RWPE1 (cell line): ENCODE measurements at regions of chr6 and their contacts with region 1.

Region 1: GRCh38 chr6:125154757-125155135 is 1.2 kb downstream of the TPD52L1 start:
- DNase-seq: peak; percentile 76
- H3K27ac ChIP-seq: no peak overlapping the region
- CTCF ChIP-seq: peak; percentile 48

Region 2: GRCh38 chr6:124823240-124824111 is 331.3 kb before region 1 on chr6:
- CTCF ChIA-PET with region 1: no interaction called
- POLR2A ChIA-PET with region 1: no interaction called
- DNase-seq: no peak
- H3K27ac ChIP-seq: no peak overlapping the region
- CTCF ChIP-seq: no peak

Region 3: GRCh38 chr6:125001684-125002405 is 152.9 kb before region 1 on chr6:
- CTCF ChIA-PET with region 1: no interaction called
- POLR2A ChIA-PET with region 1: no interaction called
- DNase-seq: no peak
- H3K27ac ChIP-seq: no peak overlapping the region
- CTCF ChIP-seq: no peak

Region 4: GRCh38 chr6:125191916-125192609 is 37.3 kb after region 1 on chr6:
- CTCF ChIA-PET with region 1: interaction called, 13 read pairs
- POLR2A ChIA-PET with region 1: no interaction called
- DNase-seq: peak; percentile 73
- H3K27ac ChIP-seq: peak overlapping the region; percentile 45
- CTCF ChIP-seq: peak; percentile 69

Region 5: DNA sequence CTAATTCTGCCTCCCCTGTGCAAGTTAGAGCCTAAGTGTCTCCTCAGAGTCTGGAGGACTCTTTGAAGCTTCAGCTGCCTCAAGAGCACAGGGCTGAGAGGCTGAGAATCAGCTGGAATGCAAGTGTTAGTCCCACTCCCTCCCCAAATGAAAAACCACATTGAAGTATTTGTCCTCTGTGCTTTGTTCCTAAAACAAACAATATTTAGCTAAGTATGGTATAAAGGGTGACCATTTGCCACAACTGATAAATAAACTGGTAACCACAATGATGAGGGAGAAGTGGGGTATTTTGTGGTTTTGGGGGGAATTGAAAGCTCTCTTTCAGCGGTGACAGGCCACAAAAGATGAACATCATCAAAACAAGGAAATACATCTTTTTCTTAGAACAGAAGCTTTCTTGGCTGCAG is 238.7 kb after region 1 on chr6:
- CTCF ChIA-PET with region 1: no interaction called
- POLR2A ChIA-PET with region 1: no interaction called
- DNase-seq: no peak
- H3K27ac ChIP-seq: no peak overlapping the region
- CTCF ChIP-seq: no peak

Region 6: GRCh38 chr6:125432982-125433381 is 278.2 kb after region 1 on chr6:
- CTCF ChIA-PET with region 1: no interaction called
- POLR2A ChIA-PET with region 1: no interaction called
- DNase-seq: no peak
- H3K27ac ChIP-seq: no peak overlapping the region
- CTCF ChIP-seq: no peak